ENCODE measurements at regions of chr14 and their contacts with region 1.

Region 1: DNA sequence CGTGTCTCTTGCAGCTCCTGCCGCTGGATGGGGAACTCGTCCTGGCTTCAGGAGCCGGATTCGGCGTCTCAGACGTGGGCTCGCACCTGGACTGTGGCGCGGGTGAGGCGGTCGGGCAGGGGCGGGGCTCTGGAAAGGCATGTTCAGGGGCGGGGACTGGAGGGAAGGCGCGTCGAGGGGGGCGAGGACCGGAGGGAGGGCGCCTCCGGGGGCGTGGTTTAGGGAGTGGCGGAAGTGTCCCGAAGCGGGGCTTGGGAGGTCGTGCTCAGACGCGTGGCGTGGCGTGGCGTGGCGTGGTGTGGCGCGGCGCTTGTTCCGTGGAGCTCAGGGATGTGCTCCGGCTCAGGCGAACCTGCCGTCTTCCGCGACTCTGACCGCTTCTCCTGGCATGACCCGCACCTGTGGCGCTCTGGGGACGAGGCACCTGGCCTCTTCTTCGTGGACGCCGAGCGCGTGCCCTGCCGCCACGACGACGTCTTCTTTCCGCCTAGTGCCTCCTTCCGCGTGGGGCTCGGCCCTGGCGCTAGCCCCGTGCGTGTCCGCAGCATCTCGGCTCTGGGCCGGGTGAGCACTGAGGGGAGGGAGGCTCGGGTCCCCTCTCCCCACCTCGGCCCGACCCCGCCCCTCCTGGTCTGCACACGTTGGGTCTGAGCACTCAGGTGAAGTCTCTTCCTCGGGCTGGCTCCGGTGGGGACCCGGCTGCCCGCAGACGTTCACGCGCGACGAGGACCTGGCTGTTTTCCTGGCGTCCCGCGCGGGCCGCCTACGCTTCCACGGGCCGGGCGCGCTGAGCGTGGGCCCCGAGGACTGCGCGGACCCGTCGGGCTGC is 6.2 kb downstream of the AMN start:
- DNase-seq: peak in 5 of 6 donors; percentile 36 to 81 (median 66)
- ATAC-seq: peak; percentile 42 to 85 (median 68)
- H3K4me3 ChIP-seq: peak overlapping the region in 2 of 4 donors; percentile 22 to 35
- H3K27ac ChIP-seq: no peak overlapping the region
- H3K4me1 ChIP-seq: peaks cover 0 to 14% (median 13%) of the 10 kb centered on the region in 3 donors
- H3K27me3 ChIP-seq: peaks cover 0 to 4% (median under 1%) of the 10 kb centered on the region in 4 donors
- CTCF ChIP-seq: no peak

Region 2: GRCh38 chr14:102768223-102769048 is 160.2 kb before region 1 on chr14:
- intact Hi-C with region 1: loop called in 1 of 3 experiments (anchors 10 kb)
- DNase-seq: peak in 1 of 6 donors; percentile 36
- ATAC-seq: peak in 2 of 4 donors; percentile 74 to 83
- H3K4me3 ChIP-seq: no peak overlapping the region
- H3K27ac ChIP-seq: no peak overlapping the region
- H3K4me1 ChIP-seq: no peaks in the 10 kb centered on the region
- H3K27me3 ChIP-seq: no peaks in the 10 kb centered on the region
- CTCF ChIP-seq: no peak

Region 3: GRCh38 chr14:103041464-103041863 is 112.8 kb after region 1 on chr14:
- intact Hi-C with region 1: no loop called
- DNase-seq: peak in 1 of 6 donors; percentile 43
- ATAC-seq: no peak
- H3K4me3 ChIP-seq: no peak overlapping the region
- H3K27ac ChIP-seq: no peak overlapping the region
- H3K4me1 ChIP-seq: peaks cover 0 to 23% (median 23%) of the 10 kb centered on the region in 3 donors
- H3K27me3 ChIP-seq: no peaks in the 10 kb centered on the region
- CTCF ChIP-seq: no peak

Region 4: DNA sequence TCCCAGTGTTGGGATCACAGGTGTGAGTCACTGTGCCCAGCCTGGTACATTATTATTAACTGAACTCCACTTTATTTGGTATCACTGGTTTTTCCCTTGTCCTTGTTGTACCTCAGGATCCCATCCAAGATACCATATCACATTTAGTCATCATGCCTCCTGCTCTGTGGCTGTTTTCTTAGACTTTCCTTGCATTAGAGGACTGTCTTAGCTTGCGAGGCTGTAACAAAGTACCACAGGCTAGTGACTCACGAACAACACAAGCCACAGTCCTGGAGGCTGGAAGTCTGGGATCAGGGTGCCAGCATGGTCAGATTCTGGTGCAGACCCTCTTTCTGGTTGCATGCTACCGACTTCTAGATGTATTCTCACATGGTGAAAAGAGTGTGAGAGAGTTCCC is 712.6 kb after region 1 on chr14:
- intact Hi-C with region 1: no loop called
- DNase-seq: no peak
- ATAC-seq: no peak
- H3K4me3 ChIP-seq: no peak overlapping the region
- H3K27ac ChIP-seq: no peak overlapping the region
- H3K4me1 ChIP-seq: no peaks in the 10 kb centered on the region
- H3K27me3 ChIP-seq: no peaks in the 10 kb centered on the region
- CTCF ChIP-seq: no peak

Measured in pancreas (tissue), 10 donors.